CD4-positive, alpha-beta T cell (primary cell): ENCODE measurements at regions of chr14 and their contacts with region 1.

Region 1: GRCh38 chr14:103078093-103078749 is 5.8 kb upstream of the LBHD2 start:
- DNase-seq: peak; percentile 64 to 91 (median 74)
- ATAC-seq: peak; percentile 88
- H3K4me3 ChIP-seq: no peak overlapping the region
- H3K4me3 Mint-ChIP-seq: peak overlapping the region; percentile 27
- H3K27ac ChIP-seq: no peak overlapping the region
- H3K27ac Mint-ChIP-seq: no peak overlapping the region
- H3K4me1 ChIP-seq: peaks cover 23% of the 10 kb centered on the region
- H3K4me1 Mint-ChIP-seq: no peaks in the 10 kb centered on the region
- H3K27me3 ChIP-seq: no peaks in the 10 kb centered on the region
- H3K27me3 Mint-ChIP-seq: peaks cover 6% of the 10 kb centered on the region
- CTCF ChIP-seq: peak; percentile 71

Region 2: GRCh38 chr14:103057365-103058096 is 20.7 kb before region 1 on chr14 and contains the start of gene CDC42BPB:
- CTCF ChIA-PET with region 1: no interaction called
- POLR2A ChIA-PET with region 1: interaction called, 3 read pairs
- intact Hi-C with region 1: loop called in 1 of 2 experiments (anchors 2 kb)
- DNase-seq: peak; percentile 25 to 82 (median 52)
- ATAC-seq: peak; percentile 89
- H3K4me3 ChIP-seq: peak within 1 kb of the TSS; percentile 52
- H3K4me3 Mint-ChIP-seq: peak within 1 kb of the TSS; percentile 88
- H3K27ac ChIP-seq: no peak within 1 kb of the TSS
- H3K27ac Mint-ChIP-seq: no peak within 1 kb of the TSS
- H3K4me1 ChIP-seq: peaks cover 18% of the 10 kb centered on the region
- H3K4me1 Mint-ChIP-seq: peaks cover 11% of the 10 kb centered on the region
- H3K27me3 ChIP-seq: peaks cover 6 to 12% of the 10 kb centered on the region in 2 experiments
- H3K27me3 Mint-ChIP-seq: peaks cover 15% of the 10 kb centered on the region
- CTCF ChIP-seq: no peak
- total RNA-seq, gene CDC42BPB: 6.6 to 7.6 TPM

Region 3: GRCh38 chr14:103091041-103091882 is 13.0 kb after region 1 on chr14:
- CTCF ChIA-PET with region 1: no interaction called
- POLR2A ChIA-PET with region 1: no interaction called
- intact Hi-C with region 1: loop called in 1 of 2 experiments (anchors 1 kb)
- DNase-seq: peak; percentile 57 to 89 (median 72)
- ATAC-seq: peak; percentile 95
- H3K4me3 ChIP-seq: peak overlapping the region; percentile 46
- H3K4me3 Mint-ChIP-seq: peak overlapping the region; percentile 11
- H3K27ac ChIP-seq: no peak overlapping the region
- H3K27ac Mint-ChIP-seq: no peak overlapping the region
- H3K4me1 ChIP-seq: peaks cover 17% of the 10 kb centered on the region
- H3K4me1 Mint-ChIP-seq: no peaks in the 10 kb centered on the region
- H3K27me3 ChIP-seq: peaks cover 0 to 9% of the 10 kb centered on the region in 2 experiments
- H3K27me3 Mint-ChIP-seq: peaks cover 15% of the 10 kb centered on the region
- CTCF ChIP-seq: peak; percentile 71

Region 4: GRCh38 chr14:103292426-103293374 is 214.5 kb after region 1 on chr14:
- CTCF ChIA-PET with region 1: no interaction called
- POLR2A ChIA-PET with region 1: no interaction called
- intact Hi-C with region 1: loop called (anchors 1 to 5 kb)
- DNase-seq: peak; percentile 46 to 82 (median 65)
- ATAC-seq: peak; percentile 85
- H3K4me3 ChIP-seq: no peak overlapping the region
- H3K4me3 Mint-ChIP-seq: no peak overlapping the region
- H3K27ac ChIP-seq: no peak overlapping the region
- H3K27ac Mint-ChIP-seq: no peak overlapping the region
- H3K4me1 ChIP-seq: no peaks in the 10 kb centered on the region
- H3K4me1 Mint-ChIP-seq: no peaks in the 10 kb centered on the region
- H3K27me3 ChIP-seq: peaks cover 0 to 2% of the 10 kb centered on the region in 2 experiments
- H3K27me3 Mint-ChIP-seq: peaks cover 18% of the 10 kb centered on the region
- CTCF ChIP-seq: peak; percentile 84